Activated B cell treated with CpG ODN at 0.5 μM for 24 hours (primary cell): ENCODE measurements at regions of chr11 and their contacts with region 1.

Region 1: DNA sequence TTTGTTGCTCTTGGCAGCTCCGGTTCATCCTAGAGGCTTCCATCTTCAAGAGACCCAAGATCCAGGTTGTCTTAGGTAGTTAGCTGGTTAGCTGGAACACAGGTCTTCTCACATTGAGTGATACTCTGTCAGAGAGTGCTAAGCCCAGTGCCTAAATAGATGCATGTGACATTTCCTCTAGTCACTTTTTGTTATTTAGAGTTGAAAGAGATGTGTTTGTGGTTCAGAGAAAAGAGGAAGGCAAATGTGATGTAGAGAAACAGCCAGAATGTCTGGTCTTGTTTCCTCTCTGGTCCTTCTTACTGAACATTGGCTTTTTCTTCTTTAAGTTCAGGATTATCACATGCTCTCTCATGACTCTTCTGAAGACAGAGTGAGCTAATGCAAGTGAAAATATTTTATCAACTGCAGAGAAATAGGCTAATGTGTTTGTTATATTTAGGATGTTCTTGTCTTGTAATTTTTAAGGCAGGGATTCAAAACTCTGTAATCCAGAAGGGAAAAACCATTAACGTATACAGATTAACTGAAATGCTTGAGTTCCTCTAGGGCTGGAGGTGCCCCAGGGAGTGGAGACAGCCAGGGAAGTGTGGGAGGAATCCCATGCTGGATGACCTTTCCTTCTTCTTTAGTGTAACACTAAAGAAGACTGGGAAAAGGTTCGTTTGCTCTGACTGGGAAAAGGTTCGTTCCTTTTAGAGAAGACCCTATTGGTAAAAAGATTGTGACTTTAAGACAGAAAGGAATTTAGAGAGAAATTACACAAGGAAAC is 75.4 kb downstream of the SWAP70 start:
- DNase-seq: no peak
- ATAC-seq: peak; percentile 83
- H3K4me3 Mint-ChIP-seq: peak overlapping the region; percentile 77
- H3K27ac Mint-ChIP-seq: peak overlapping the region; percentile 97
- H3K4me1 Mint-ChIP-seq: peaks cover 75% of the 10 kb centered on the region
- H3K27me3 Mint-ChIP-seq: no peaks in the 10 kb centered on the region
- CTCF ChIP-seq: no peak

Region 2: GRCh38 chr11:9708544-9708943 is 30.8 kb before region 1 on chr11:
- CTCF ChIA-PET with region 1: no interaction called
- POLR2A ChIA-PET with region 1: interaction called, 10 read pairs
- intact Hi-C with region 1: no loop called
- DNase-seq: no peak
- ATAC-seq: no peak
- H3K4me3 Mint-ChIP-seq: peak overlapping the region; percentile 6
- H3K27ac Mint-ChIP-seq: peak overlapping the region; percentile 80
- H3K4me1 Mint-ChIP-seq: peaks cover 70% of the 10 kb centered on the region
- H3K27me3 Mint-ChIP-seq: no peaks in the 10 kb centered on the region
- CTCF ChIP-seq: no peak

Region 3: GRCh38 chr11:9726321-9727022 is 12.8 kb before region 1 on chr11:
- CTCF ChIA-PET with region 1: interaction called, 4 read pairs
- POLR2A ChIA-PET with region 1: interaction called, 22 read pairs
- intact Hi-C with region 1: loop called (anchors 1 kb)
- DNase-seq: no peak
- ATAC-seq: peak; percentile 35
- H3K4me3 Mint-ChIP-seq: peak overlapping the region; percentile 47
- H3K27ac Mint-ChIP-seq: peak overlapping the region; percentile 84
- H3K4me1 Mint-ChIP-seq: peaks cover 82% of the 10 kb centered on the region
- H3K27me3 Mint-ChIP-seq: no peaks in the 10 kb centered on the region
- CTCF ChIP-seq: no peak